B cell (primary cell): ENCODE measurements at regions of chr2 and their contacts with region 1.

Region 1: GRCh38 chr2:27217217-27218121 is at the start of gene CAD:
- DNase-seq: peak; percentile 89
- ATAC-seq: peak; percentile 86
- H3K4me3 ChIP-seq: peak within 1 kb of the TSS; percentile 11 to 85 (median 79)
- H3K4me3 Mint-ChIP-seq: peak within 1 kb of the TSS; percentile 98
- H3K27ac ChIP-seq: peak within 1 kb of the TSS; percentile 70 to 74
- H3K27ac Mint-ChIP-seq: peak within 1 kb of the TSS; percentile 87
- H3K4me1 ChIP-seq: peaks cover 28 to 33% of the 10 kb centered on the region in 2 donors
- H3K4me1 Mint-ChIP-seq: peaks cover 44% of the 10 kb centered on the region
- H3K27me3 ChIP-seq: no peaks in the 10 kb centered on the region
- H3K27me3 Mint-ChIP-seq: no peaks in the 10 kb centered on the region
- CTCF ChIP-seq: no peak
- total RNA-seq, gene CAD: 35.6 and 36.0 TPM in 2 replicates

Region 2: DNA sequence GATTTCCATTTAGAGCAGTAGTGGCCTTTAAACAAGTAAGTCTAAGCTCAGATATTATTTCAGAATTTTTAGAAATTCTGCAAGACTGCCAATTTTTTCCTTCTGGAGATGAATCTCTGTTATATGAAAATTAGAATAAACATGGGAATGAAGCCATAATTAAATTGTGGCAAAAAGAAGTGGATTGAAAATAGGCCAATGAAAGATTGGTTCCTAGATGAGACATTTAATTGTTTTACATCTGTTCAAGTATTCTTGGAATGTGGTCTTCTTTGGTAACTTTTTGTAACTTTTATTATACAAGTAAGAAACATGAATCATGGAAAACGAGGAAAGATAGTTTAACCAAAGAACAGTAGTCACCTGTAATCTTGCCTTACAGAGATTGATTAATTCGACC is 10.0 kb after region 1 on chr2:
- CTCF ChIA-PET with region 1: no interaction called
- POLR2A ChIA-PET with region 1: no interaction called
- intact Hi-C with region 1: no loop called
- DNase-seq: no peak
- ATAC-seq: no peak
- H3K4me3 ChIP-seq: no peak overlapping the region
- H3K4me3 Mint-ChIP-seq: no peak overlapping the region
- H3K27ac ChIP-seq: no peak overlapping the region
- H3K27ac Mint-ChIP-seq: no peak overlapping the region
- H3K4me1 ChIP-seq: no peaks in the 10 kb centered on the region
- H3K4me1 Mint-ChIP-seq: no peaks in the 10 kb centered on the region
- H3K27me3 ChIP-seq: no peaks in the 10 kb centered on the region
- H3K27me3 Mint-ChIP-seq: no peaks in the 10 kb centered on the region
- CTCF ChIP-seq: no peak

Region 3: GRCh38 chr2:27264753-27265535 is 47.5 kb after region 1 on chr2:
- CTCF ChIA-PET with region 1: interaction called, 3 read pairs
- POLR2A ChIA-PET with region 1: no interaction called
- intact Hi-C with region 1: loop called (anchors 1 kb)
- DNase-seq: peak; percentile 88
- ATAC-seq: peak; percentile 69
- H3K4me3 ChIP-seq: peak overlapping the region; percentile 23 to 68 (median 64)
- H3K4me3 Mint-ChIP-seq: peak overlapping the region; percentile 94
- H3K27ac ChIP-seq: peak overlapping the region in 1 of 2 donors; percentile 59
- H3K27ac Mint-ChIP-seq: no peak overlapping the region
- H3K4me1 ChIP-seq: peaks cover 35 to 38% of the 10 kb centered on the region in 2 donors
- H3K4me1 Mint-ChIP-seq: peaks cover 35% of the 10 kb centered on the region
- H3K27me3 ChIP-seq: peaks cover 0 to 69% (median 32%) of the 10 kb centered on the region in 4 experiments
- H3K27me3 Mint-ChIP-seq: peaks cover 47% of the 10 kb centered on the region
- CTCF ChIP-seq: peak; percentile 68